ENCODE measurements at regions of chr14 and their contacts with region 1.

Region 1: DNA sequence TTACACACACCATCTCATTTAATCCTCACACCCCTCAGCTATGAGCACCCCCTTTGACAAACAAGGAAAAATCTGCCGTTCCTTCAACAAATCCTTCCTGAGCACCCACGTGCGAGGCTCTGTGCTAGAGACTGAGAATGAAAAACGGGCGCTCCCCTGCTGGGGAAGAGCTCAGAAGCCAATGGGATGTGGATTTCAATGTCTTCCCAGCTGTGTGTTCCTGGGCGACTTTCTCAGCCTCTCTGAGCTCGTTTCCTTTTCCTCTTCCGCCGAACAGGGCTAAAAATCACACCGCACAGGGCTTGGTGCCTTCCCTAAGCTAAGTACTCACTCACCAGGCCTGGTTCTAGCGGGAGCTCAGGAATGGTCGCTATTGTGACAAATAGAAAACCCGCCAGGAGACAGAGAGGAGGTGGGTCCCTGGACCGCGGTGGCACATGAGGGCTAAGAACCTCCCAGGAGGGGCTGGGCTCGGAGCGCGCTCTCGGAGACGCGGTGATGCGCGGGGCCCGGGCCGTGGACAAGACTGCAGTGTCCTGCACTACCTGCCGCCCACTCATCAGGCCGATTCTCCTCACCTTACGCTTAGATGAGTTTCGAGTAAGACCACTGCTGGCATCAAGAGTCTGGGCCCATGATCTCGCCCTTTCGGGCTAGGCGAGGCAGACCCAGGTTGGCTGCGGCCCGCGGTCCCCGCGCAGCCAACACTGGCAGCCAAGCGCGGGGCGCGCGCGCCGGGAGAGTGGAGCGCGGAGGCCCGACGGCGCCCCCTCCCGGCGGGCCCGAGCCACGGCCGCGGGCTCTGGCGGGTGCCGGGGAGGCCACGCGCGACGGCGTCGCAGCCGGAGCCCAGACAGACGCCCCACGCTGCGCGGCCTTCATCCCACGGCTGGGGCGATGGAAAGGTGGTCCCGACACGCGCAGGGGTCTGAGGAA is 17.0 kb downstream of the ZDHHC22 start:
- DNase-seq: peak; percentile 80
- ATAC-seq: peak; percentile 35
- H3K4me3 Mint-ChIP-seq: peak overlapping the region; percentile 85
- H3K27ac Mint-ChIP-seq: peak overlapping the region; percentile 98
- H3K4me1 Mint-ChIP-seq: peaks cover 61% of the 10 kb centered on the region
- H3K27me3 Mint-ChIP-seq: peaks cover 5% of the 10 kb centered on the region
- CTCF ChIP-seq: no peak

Region 2: DNA sequence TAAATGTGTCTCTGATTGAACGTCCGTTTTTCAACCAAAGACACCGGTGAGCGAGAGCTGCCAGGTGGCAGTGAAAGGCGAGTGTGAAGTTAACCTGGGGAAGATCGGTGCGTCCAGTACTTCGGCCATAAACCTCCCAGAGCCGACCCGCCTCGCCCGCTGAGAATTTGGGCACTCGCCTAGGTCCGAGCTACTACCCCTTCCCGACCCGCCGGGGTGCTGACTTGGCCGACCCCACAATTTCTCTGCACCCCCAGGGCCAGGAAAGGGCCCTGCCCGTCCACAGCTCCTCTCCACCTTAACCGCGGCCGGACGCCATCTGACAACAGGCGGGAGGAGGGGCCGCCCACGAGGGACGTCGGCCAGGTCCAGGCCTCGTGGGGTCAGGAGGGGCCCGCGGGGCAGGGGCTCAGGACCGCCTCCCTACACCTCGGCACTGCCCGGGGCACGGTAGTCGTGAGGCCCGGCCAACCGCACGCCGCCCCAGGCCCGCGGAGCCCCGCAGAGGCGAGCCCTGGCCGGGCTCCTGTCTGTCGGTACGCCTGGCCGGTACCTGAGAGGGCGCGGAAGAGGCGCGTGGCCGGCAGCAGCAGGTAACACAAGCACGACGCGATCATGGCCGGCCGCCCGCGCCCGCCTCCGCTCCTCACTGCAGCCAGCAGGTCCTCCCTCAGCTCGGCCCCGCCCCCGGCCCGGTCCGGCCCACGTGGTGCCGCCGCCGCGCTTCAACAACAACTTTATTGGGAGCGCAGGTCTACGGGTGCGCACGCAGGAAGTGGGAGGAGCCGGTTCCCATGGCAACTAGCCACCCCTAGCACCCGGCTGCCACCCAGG is 312.2 kb before region 1 on chr14 and contains the start of gene ANGEL1:
- CTCF ChIA-PET with region 1: no interaction called
- POLR2A ChIA-PET with region 1: interaction called, 8 read pairs
- intact Hi-C with region 1: loop called (anchors 1 kb)
- DNase-seq: peak; percentile 97
- ATAC-seq: peak; percentile 95
- H3K4me3 Mint-ChIP-seq: peak within 1 kb of the TSS; percentile 95
- H3K27ac Mint-ChIP-seq: peak within 1 kb of the TSS; percentile 91
- H3K4me1 Mint-ChIP-seq: peaks cover 25% of the 10 kb centered on the region
- H3K27me3 Mint-ChIP-seq: no peaks in the 10 kb centered on the region
- CTCF ChIP-seq: no peak
- total RNA-seq, gene ANGEL1: 14.9 and 17.9 TPM in 2 replicates

Region 3: GRCh38 chr14:76962303-76962660 is 162.3 kb before region 1 on chr14:
- CTCF ChIA-PET with region 1: interaction called, 4 read pairs
- POLR2A ChIA-PET with region 1: interaction called, 21 read pairs
- intact Hi-C with region 1: loop called (anchors 1 kb)
- DNase-seq: no peak
- ATAC-seq: no peak
- H3K4me3 Mint-ChIP-seq: peak overlapping the region; percentile 84
- H3K27ac Mint-ChIP-seq: peak overlapping the region; percentile 94
- H3K4me1 Mint-ChIP-seq: peaks cover 78% of the 10 kb centered on the region
- H3K27me3 Mint-ChIP-seq: no peaks in the 10 kb centered on the region
- CTCF ChIP-seq: no peak

Region 4: GRCh38 chr14:77086017-77086736 is 38.4 kb before region 1 on chr14:
- CTCF ChIA-PET with region 1: interaction called, 112 read pairs
- POLR2A ChIA-PET with region 1: interaction called, 7 read pairs
- intact Hi-C with region 1: loop called (anchors 5 kb)
- DNase-seq: no peak
- ATAC-seq: peak; percentile 81
- H3K4me3 Mint-ChIP-seq: no peak overlapping the region
- H3K27ac Mint-ChIP-seq: peak overlapping the region; percentile 26
- H3K4me1 Mint-ChIP-seq: peaks cover 22% of the 10 kb centered on the region
- H3K27me3 Mint-ChIP-seq: no peaks in the 10 kb centered on the region
- CTCF ChIP-seq: no peak

Region 5: DNA sequence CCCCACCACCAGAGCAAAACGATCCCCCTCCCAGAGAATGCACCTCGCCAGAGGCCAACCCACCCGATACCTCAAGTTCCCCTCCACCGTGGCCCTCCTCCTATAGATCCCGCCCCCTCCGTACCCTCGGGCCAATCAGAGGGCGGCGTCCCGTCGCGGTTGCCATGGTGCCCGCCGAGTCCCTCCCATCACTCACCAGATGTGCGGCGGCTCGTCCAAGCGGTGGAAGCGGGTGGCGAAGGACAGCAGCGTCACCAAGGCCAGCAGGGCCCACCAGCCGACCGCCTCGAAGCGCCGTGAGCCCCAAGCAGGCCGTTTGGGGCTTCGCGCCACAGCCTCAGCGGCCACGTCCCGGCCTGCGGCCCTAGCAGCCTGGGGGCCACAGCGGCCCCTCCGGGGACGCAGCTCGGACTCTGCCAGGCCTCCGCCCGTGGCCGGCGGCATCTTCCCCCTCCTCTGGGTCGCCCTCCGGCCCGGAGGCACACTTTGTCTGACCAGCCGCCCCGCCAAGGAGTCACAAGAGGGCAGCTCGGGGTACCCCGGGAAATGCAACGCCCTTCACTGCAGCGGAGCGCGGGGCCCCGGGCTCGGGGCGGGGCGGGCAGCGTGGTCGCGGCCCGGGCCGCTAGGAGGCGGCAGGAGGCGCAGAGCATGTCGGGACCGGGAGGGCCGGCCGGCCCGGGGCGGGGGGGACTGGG is 195.8 kb after region 1 on chr14 and contains the start of gene POMT2:
- CTCF ChIA-PET with region 1: interaction called, 8 read pairs
- POLR2A ChIA-PET with region 1: interaction called, 26 read pairs
- intact Hi-C with region 1: no loop called
- DNase-seq: peak; percentile 93
- ATAC-seq: peak; percentile 54
- H3K4me3 Mint-ChIP-seq: peak within 1 kb of the TSS; percentile 99
- H3K27ac Mint-ChIP-seq: peak within 1 kb of the TSS; percentile 100
- H3K4me1 Mint-ChIP-seq: peaks cover 19% of the 10 kb centered on the region
- H3K27me3 Mint-ChIP-seq: no peaks in the 10 kb centered on the region
- CTCF ChIP-seq: no peak
- total RNA-seq, gene POMT2: 28.7 and 30.8 TPM in 2 replicates

Region 6: GRCh38 chr14:77681196-77682157 is 556.9 kb after region 1 on chr14:
- CTCF ChIA-PET with region 1: no interaction called
- POLR2A ChIA-PET with region 1: no interaction called
- intact Hi-C with region 1: no loop called
- DNase-seq: no peak
- ATAC-seq: no peak
- H3K4me3 Mint-ChIP-seq: no peak overlapping the region
- H3K27ac Mint-ChIP-seq: no peak overlapping the region
- H3K4me1 Mint-ChIP-seq: no peaks in the 10 kb centered on the region
- H3K27me3 Mint-ChIP-seq: no peaks in the 10 kb centered on the region
- CTCF ChIP-seq: no peak